ENCODE measurements at regions of chr19 and their contacts with region 1.

Region 1: GRCh38 chr19:17052439-17053210 is 22.6 kb downstream of the HAUS8 start:
- DNase-seq: no peak
- H3K4me3 ChIP-seq: no peak overlapping the region
- H3K27ac ChIP-seq: no peak overlapping the region
- H3K4me1 ChIP-seq: no peaks in the 10 kb centered on the region
- H3K27me3 ChIP-seq: no peaks in the 10 kb centered on the region
- CTCF ChIP-seq: peak; percentile 21 to 72 (median 53)
- POLR2A ChIP-seq: no peak

Region 2: DNA sequence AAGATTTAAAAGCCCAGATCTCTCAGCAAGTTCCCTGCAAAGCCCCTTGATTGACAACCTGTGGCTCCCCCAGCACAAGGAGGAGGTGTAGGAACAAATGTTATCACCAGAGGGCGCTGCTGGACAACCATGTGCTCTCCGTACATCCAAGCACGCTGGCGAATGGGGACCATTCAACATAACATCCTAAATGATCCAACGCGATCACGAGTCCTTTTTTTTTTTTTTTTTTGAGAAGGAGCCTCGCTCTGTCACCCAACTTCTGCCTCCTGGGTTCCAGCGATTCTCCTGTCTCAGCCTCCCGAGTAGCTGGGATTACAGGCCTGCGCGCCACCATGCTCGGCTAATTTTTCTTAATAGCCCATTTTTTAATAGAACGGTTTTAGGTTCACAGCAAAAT is 281.0 kb before region 1 on chr19:
- intact Hi-C with region 1: loop called (anchors 5 kb)
- DNase-seq: peak; percentile 81
- H3K4me3 ChIP-seq: no peak overlapping the region
- H3K27ac ChIP-seq: no peak overlapping the region
- H3K4me1 ChIP-seq: peaks cover 0 to 7% (median 0%) of the 10 kb centered on the region in 6 donors
- H3K27me3 ChIP-seq: peaks cover 0 to 17% (median 0%) of the 10 kb centered on the region in 7 donors
- CTCF ChIP-seq: peak; percentile 74 to 93 (median 87)
- POLR2A ChIP-seq: no peak